ENCODE measurements at regions of chr11 and their contacts with region 1.

Region 1: DNA sequence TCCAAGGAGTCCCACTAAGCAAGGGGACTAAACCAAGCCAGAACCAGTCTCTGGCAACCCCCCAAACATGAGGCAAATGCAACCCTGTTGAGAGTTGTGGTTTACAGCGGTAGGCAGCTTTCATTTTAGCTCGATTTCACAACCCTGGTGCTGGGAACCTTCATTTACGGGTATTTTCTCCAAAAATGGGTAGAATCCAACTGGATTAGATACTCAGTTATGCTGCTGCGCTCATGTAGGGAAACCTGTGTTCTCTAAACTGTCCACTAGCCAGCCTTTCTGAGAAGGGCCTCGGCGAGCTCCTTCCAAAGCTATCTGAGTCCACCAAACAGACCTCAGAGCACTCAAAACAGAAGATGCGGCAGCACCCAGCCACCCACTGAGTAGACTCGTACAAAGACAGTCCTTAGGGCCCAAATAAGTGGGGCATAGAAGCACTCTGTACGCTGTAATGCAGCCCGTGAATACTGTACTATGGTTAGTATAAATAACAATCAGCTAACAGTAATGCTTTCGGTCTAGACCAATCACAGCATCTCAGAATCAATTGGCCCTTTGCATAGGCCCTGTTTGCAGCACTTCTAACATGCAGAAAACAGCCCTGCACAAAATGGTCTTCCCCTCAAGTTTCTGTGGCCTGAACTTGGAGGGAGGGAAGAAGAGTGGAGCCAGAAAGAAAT is 104.7 kb downstream of the ETS1 start:
- DNase-seq: peak; percentile 80
- H3K4me3 Mint-ChIP-seq: peak overlapping the region; percentile 69
- H3K27ac Mint-ChIP-seq: peak overlapping the region; percentile 92
- H3K4me1 Mint-ChIP-seq: peaks cover 96% of the 10 kb centered on the region
- H3K27me3 Mint-ChIP-seq: no peaks in the 10 kb centered on the region

Region 2: DNA sequence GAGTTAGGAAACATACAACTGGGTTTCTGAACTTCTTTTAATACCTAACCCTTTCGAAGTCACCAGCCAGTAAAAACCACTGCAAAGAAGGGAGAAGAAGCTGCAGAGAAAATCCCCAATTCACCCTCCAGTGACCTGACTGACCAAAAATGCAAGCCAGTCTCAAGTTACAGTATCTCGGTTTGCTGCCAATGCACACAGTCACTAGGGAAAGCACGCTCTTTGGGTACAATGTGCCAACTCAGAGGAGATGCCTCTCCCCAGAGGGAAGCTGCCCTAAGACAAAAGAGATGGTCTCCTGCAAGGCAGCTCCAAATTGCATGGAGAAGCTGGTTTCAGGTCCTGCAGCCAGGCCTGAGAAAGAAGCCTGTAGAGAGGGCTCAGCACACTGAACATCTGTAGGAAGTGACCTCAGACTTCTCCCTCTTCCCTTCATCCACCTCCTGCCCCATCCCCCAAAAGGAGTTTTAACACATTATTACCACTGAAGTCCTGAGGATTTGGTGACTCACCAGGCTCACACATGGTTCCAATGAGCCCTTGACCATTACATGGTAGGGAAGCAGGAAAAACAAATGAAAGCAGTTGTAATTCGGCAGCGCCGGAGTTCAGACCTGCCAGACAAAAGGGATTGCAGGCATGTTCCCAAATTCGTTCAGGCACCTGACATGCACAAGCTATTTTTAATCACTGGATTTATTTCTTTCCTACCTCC is 14.6 kb after region 1 on chr11:
- CTCF ChIA-PET with region 1: interaction called, 8 read pairs
- POLR2A ChIA-PET with region 1: interaction called, 407 read pairs
- intact Hi-C with region 1: no loop called
- DNase-seq: peak; percentile 67
- H3K4me3 Mint-ChIP-seq: peak overlapping the region; percentile 71
- H3K27ac Mint-ChIP-seq: peak overlapping the region; percentile 91
- H3K4me1 Mint-ChIP-seq: peaks cover 95% of the 10 kb centered on the region
- H3K27me3 Mint-ChIP-seq: no peaks in the 10 kb centered on the region

Region 3: GRCh38 chr11:128506999-128507611 is 24.5 kb after region 1 on chr11:
- CTCF ChIA-PET with region 1: interaction called, 20 read pairs
- POLR2A ChIA-PET with region 1: interaction called, 407 read pairs
- intact Hi-C with region 1: no loop called
- DNase-seq: peak; percentile 74
- H3K4me3 Mint-ChIP-seq: peak overlapping the region; percentile 77
- H3K27ac Mint-ChIP-seq: peak overlapping the region; percentile 96
- H3K4me1 Mint-ChIP-seq: peaks cover 90% of the 10 kb centered on the region
- H3K27me3 Mint-ChIP-seq: no peaks in the 10 kb centered on the region

Region 4: DNA sequence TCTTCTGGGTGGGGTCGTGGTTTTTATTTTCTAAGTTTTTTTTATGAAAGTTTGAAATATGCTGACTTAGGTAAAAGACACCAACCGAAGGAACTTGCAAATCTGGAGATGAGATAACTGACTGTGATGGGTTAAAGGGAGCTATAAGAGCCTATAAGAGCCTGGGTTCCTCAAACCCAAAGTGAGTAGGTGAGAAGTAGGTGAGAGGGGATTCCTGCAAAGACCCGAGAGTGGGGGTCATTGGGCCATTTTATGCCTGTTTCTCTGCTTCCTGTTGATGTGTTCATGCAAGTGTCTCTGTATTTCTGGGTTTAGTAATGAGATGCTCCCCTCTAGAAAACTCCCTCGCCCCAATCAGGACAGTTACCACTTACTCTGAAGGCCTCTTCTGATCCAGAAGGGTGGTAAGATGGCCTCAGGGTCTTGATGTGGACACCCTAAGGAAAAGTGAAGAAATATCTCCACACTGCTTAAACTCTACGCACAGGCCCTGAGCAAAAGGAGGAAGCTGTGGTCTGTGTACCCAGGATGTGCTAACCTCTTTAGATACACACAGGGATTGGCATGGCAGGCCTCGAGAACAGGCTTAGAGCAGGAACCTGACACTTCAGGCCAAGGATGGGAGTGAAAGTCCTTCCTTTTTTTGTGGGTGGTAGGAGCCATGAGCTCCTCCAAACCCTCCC is 213.0 kb after region 1 on chr11:
- CTCF ChIA-PET with region 1: interaction called, 3 read pairs
- POLR2A ChIA-PET with region 1: interaction called, 5 read pairs
- intact Hi-C with region 1: loop called (anchors 5 kb)
- DNase-seq: peak; percentile 55
- H3K4me3 Mint-ChIP-seq: peak overlapping the region; percentile 78
- H3K27ac Mint-ChIP-seq: peak overlapping the region; percentile 89
- H3K4me1 Mint-ChIP-seq: peaks cover 57% of the 10 kb centered on the region
- H3K27me3 Mint-ChIP-seq: peaks cover 5% of the 10 kb centered on the region

Measured in activated CD4-positive, alpha-beta memory T cell treated with anti-CD3 and anti-CD28 coated beads for 36 hours (primary cell).